ENCODE measurements at regions of chr11 and their contacts with region 1.

Region 1: DNA sequence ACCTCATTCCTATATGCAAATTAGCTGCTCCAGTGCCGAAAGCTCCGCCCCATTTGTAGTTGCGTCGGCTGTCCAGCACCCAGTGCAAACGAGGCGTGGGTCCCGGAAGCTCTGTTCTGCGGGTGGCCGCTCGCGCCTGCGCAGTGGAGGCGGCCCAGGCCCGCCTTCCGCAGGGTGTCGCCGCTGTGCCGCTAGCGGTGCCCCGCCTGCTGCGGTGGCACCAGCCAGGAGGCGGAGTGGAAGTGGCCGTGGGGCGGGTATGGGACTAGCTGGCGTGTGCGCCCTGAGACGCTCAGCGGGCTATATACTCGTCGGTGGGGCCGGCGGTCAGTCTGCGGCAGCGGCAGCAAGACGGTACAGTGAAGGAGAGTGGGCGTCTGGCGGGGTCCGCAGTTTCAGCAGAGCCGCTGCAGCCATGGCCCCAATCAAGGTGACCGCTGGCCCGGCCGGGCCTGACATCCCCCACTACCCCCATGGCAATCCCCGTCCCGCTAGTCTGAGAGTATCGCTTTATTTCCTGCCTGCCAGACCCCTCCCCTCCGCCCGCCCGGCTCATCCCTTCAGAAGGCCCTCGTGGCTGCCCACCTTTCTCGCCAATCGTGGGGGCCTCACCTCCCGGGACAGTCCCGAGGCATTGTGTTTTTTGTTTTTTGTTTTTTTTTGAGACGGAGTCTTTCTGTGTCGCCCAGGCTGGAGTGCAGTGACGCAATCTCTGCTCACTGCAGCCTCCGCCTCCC is at the start of gene PRDX5:
- DNase-seq: peak; percentile 96
- H3K4me3 Mint-ChIP-seq: peak within 1 kb of the TSS; percentile 94
- H3K27ac Mint-ChIP-seq: peak within 1 kb of the TSS; percentile 100
- H3K4me1 Mint-ChIP-seq: peaks cover 34% of the 10 kb centered on the region
- H3K27me3 Mint-ChIP-seq: no peaks in the 10 kb centered on the region
- total RNA-seq, gene PRDX5: 89.0 and 100 TPM in 2 replicates

Region 2: DNA sequence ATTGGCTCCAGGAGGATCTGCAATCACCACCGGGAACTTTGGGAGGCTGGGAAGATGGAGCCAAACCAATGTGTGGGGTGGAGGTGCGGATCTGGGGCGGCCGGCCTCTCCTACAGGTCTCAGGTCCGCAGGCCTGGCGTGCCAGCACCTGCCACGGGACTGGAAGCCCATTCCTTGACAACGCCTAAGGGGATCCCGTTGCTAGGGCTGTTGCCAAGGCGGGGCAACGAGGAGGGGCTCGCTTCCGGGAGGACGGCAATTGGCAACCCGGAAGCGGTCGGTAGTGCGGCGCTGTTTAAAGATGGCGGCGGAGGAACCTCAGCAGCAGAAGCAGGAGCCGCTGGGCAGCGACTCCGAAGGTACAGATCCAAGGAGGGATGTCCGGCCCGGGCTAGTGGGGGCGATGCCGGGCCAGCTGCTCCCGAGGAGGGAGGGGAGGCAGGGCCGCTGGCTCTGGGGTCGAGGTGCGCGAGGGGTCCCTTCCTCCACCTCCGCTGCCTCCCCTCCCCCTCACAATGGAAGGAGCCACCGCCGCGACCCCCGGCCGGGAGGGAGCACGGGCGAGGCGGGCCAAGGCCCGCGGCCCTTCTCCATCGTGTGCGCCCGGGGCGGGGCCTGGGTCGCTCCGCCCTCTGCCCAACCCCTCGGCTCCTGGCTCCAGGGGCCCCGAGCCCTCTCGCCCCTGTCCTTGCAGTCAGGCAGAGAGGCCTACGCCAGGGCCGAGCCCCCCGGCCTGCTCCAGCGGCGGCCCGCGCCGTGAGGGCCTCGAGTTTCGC is 331.8 kb before region 1 on chr11 and contains the start of gene OTUB1:
- intact Hi-C with region 1: loop called (anchors 5 kb)
- DNase-seq: peak; percentile 86
- H3K4me3 Mint-ChIP-seq: peak within 1 kb of the TSS; percentile 97
- H3K27ac Mint-ChIP-seq: peak within 1 kb of the TSS; percentile 96
- H3K4me1 Mint-ChIP-seq: peaks cover 32% of the 10 kb centered on the region
- H3K27me3 Mint-ChIP-seq: no peaks in the 10 kb centered on the region
- total RNA-seq, gene OTUB1: 104 and 114 TPM in 2 replicates

Region 3: GRCh38 chr11:64240394-64241174 is 77.5 kb before region 1 on chr11 and contains the start of gene FKBP2:
- intact Hi-C with region 1: loop called (anchors 1 kb)
- DNase-seq: peak; percentile 99
- H3K4me3 Mint-ChIP-seq: peak within 1 kb of the TSS; percentile 94
- H3K27ac Mint-ChIP-seq: peak within 1 kb of the TSS; percentile 94
- H3K4me1 Mint-ChIP-seq: peaks cover 36% of the 10 kb centered on the region
- H3K27me3 Mint-ChIP-seq: no peaks in the 10 kb centered on the region
- total RNA-seq, gene FKBP2: 32.6 and 34.3 TPM in 2 replicates

Region 4: DNA sequence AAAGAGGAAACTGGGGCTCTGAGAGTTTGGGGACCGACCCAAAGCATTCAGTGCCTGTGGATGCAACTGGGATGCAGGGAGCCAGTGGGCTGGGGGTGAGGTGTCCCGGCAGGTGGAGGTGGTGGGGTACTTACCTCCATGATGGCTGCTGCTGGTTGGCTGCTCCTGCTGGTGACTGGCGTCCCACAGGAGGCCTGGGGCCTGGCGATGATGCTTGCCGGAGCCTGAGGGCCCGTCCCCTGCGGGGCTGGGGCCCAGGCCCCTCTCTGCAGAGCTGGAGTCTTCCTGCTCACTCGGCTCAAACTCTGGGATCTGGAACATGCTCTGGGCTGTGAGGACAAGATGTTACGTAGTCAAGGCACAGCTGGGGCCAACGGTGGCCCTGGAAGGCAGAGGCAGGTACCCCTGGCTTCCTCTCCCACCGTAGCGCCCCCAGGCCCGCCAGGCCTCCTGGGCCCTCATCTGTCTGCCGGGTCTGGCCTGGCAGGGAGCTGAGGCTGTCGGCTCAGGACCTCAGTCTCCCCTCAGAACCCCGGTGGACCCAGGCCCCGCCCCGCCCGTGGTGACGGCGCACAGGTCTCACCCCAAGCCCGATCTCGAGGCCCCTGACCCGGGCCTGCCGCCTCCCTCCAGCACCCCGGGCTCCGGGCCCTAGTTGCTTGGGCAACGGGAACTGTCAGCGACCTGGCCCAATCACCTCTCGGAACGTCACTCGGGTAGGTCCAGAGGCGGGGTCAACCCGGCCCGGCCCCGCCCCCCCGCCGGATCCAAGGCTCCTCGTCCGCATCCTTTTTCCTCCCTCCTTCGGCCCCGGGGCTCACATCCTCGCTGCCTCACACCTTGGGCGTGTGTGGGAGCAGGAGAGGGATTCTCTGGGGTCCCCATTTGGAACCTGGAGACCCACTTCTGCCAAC is 33.8 kb before region 1 on chr11 and contains the start of gene BAD:
- intact Hi-C with region 1: loop called (anchors 1 kb)
- DNase-seq: peak; percentile 91
- H3K4me3 Mint-ChIP-seq: peak within 1 kb of the TSS; percentile 87
- H3K27ac Mint-ChIP-seq: peak within 1 kb of the TSS; percentile 95
- H3K4me1 Mint-ChIP-seq: peaks cover 30% of the 10 kb centered on the region
- H3K27me3 Mint-ChIP-seq: peaks cover 1% of the 10 kb centered on the region
- total RNA-seq, gene BAD: 30.1 and 38.0 TPM in 2 replicates

Region 5: DNA sequence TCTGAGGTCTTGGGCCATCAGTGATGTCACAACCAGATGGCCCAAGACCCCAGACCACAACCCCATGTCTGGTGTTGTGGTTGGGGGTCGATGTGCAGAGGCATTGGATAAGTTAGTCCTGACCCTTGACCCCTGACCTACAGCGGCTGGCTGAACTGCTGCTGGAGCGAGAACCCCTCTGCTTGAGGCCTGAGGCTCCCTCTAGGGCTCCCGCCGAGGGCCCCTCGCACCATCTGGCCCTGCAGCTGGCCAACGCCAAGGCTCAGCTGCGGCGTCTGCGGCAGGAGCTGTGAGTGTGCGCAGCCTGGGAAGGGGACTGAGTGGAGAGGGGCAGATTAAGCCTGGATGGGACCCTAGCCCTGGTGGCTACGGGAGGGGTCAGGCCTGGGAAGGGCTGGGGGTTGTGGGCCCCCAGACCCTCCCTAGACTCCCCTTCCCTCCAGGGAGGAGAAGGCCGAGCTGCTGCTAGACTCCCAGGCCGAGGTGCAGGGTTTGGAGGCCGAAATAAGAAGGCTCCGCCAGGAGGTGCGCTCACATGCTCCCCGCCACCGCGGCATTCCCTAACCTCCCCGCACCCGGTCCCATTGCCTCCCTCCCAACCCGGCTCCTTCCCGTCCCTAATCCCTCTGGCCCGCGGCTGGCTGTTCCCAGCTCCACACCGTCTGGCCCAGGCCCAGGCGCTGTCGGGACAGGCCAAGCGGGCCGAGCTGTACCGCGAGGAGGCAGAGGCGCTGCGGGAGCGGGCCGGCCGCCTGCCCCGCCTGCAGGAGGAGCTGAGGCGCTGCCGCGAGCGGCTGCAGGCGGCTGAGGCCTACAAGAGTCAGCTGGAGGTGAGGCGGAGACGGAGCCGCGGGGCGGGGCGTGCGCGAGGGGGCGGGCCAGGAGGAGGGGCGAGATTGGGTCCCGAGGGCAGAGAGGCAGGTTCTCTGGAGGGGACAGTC is 24.0 kb after region 1 on chr11:
- intact Hi-C with region 1: loop called (anchors 1 kb)
- DNase-seq: peak; percentile 91
- H3K4me3 Mint-ChIP-seq: peak overlapping the region; percentile 39
- H3K27ac Mint-ChIP-seq: no peak overlapping the region
- H3K4me1 Mint-ChIP-seq: peaks cover 32% of the 10 kb centered on the region
- H3K27me3 Mint-ChIP-seq: no peaks in the 10 kb centered on the region